SK-N-SH (cell line): ENCODE measurements at regions of chr2 and their contacts with region 1.

Region 1: DNA sequence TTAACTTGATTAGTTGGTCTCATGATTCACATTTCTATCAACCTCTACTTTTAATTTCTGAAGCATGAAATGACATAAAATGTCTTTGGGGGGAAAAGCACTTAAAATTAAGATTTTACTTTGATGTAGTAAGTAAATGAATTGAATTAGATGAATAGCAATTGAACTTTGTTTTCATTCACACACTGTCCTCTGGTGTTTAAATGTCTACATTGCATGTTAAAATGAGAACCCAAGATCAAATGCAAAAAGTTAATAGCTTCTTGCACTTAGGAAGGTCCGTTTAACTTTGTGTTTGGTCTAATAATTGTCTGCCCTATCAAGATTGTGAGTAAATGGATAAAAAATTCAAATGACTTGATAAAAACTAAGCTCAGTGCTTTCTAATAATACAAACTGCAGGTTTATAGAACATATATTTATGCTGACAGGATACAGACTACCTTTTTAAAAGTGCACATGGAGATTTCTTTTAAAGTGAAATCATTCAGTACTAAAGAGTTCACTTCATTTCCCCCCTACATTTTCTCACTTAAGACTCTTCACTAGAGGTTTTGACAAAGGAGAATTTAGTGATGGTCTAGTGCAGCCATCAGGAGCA is 156.2 kb upstream of the NABP1 start:
- DNase-seq: peak; percentile 46
- H3K4me3 ChIP-seq: no peak overlapping the region; a peak in 1 of 4 replicates
- H3K27ac ChIP-seq: peak overlapping the region in 1 of 2 experiments; percentile 51; a peak in 1 of 4 replicates
- H3K4me1 ChIP-seq: peaks cover 0 to 5% of the 10 kb centered on the region in 2 experiments; a peak in 2 of 4 replicates
- H3K27me3 ChIP-seq: no peaks in the 10 kb centered on the region
- CTCF ChIP-seq: peak; percentile 86
- EP300 ChIP-seq: no peak
- RAD21 ChIP-seq: peak; percentile 87

Region 2: GRCh38 chr2:191158193-191158592 is 363.5 kb before region 1 on chr2:
- CTCF ChIA-PET with region 1: interaction called, 11 read pairs
- POLR2A ChIA-PET with region 1: no interaction called
- DNase-seq: no peak
- H3K4me3 ChIP-seq: no peak overlapping the region
- H3K27ac ChIP-seq: no peak overlapping the region
- H3K4me1 ChIP-seq: no peaks in the 10 kb centered on the region
- H3K27me3 ChIP-seq: no peaks in the 10 kb centered on the region
- CTCF ChIP-seq: no peak
- EP300 ChIP-seq: no peak
- RAD21 ChIP-seq: no peak

Region 3: GRCh38 chr2:191171708-191172355 is 349.9 kb before region 1 on chr2:
- CTCF ChIA-PET with region 1: interaction called, 35 read pairs
- POLR2A ChIA-PET with region 1: no interaction called
- DNase-seq: no peak
- H3K4me3 ChIP-seq: 0 out of 4 replicates have a peak overlapping the region, but pooled peaks of 1 of the 2 experiments have one; percentile 18
- H3K27ac ChIP-seq: peak overlapping the region; percentile 88 to 90
- H3K4me1 ChIP-seq: peaks cover 12 to 37% of the 10 kb centered on the region in 2 experiments
- H3K27me3 ChIP-seq: no peaks in the 10 kb centered on the region
- CTCF ChIP-seq: no peak
- EP300 ChIP-seq: peak in 1 of 2 experiments; percentile 93; a peak in 2 of 4 replicates
- RAD21 ChIP-seq: no peak

Region 4: GRCh38 chr2:191245046-191245868 is 276.5 kb before region 1 on chr2 and contains the start of gene MYO1B:
- CTCF ChIA-PET with region 1: interaction called, 11 read pairs
- POLR2A ChIA-PET with region 1: no interaction called
- DNase-seq: peak; percentile 94
- H3K4me3 ChIP-seq: peak within 1 kb of the TSS; percentile 74 to 93
- H3K27ac ChIP-seq: peak within 1 kb of the TSS; percentile 90 to 99
- H3K4me1 ChIP-seq: peaks cover 22 to 30% of the 10 kb centered on the region in 2 experiments; a peak in 3 of 4 replicates
- H3K27me3 ChIP-seq: no peaks in the 10 kb centered on the region
- CTCF ChIP-seq: peak; percentile 67
- EP300 ChIP-seq: peak in 1 of 2 experiments; percentile 26; a peak in 1 of 4 replicates
- RAD21 ChIP-seq: peak; percentile 83
- polyA plus RNA-seq, gene MYO1B: 20.2 and 26.5 TPM in 2 replicates

Region 5: GRCh38 chr2:191434072-191434471 is 87.6 kb before region 1 on chr2:
- CTCF ChIA-PET with region 1: no interaction called
- POLR2A ChIA-PET with region 1: no interaction called
- DNase-seq: no peak
- H3K4me3 ChIP-seq: no peak overlapping the region
- H3K27ac ChIP-seq: no peak overlapping the region
- H3K4me1 ChIP-seq: no peaks in the 10 kb centered on the region; a peak in 1 of 4 replicates
- H3K27me3 ChIP-seq: no peaks in the 10 kb centered on the region
- CTCF ChIP-seq: no peak
- EP300 ChIP-seq: no peak
- RAD21 ChIP-seq: no peak

Region 6: GRCh38 chr2:191544461-191545062 is 22.9 kb after region 1 on chr2:
- CTCF ChIA-PET with region 1: interaction called, 15 read pairs
- POLR2A ChIA-PET with region 1: no interaction called
- DNase-seq: no peak
- H3K4me3 ChIP-seq: no peak overlapping the region
- H3K27ac ChIP-seq: no peak overlapping the region
- H3K4me1 ChIP-seq: peaks cover 0 to 4% of the 10 kb centered on the region in 2 experiments; a peak in 2 of 4 replicates
- H3K27me3 ChIP-seq: no peaks in the 10 kb centered on the region
- CTCF ChIP-seq: no peak
- EP300 ChIP-seq: no peak
- RAD21 ChIP-seq: no peak

Region 7: DNA sequence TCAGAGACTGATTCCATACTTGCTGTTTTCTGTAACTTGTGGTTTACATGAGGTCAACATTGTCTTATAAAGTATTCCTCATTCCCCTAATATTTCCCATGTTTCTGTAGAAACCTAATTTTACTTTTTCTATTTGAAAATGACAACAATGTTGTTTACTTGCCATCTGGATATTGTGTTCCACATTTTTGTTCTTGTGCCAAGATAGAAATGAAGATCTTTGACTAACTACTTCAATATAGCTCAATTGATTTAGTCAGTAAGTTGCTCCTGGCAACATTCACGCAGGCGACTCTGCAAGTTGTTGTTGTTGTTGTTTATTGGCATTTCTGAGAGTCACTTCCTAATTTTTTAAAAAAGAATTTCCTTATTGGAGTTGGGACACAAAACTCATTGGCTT is 255.6 kb after region 1 on chr2:
- CTCF ChIA-PET with region 1: no interaction called
- POLR2A ChIA-PET with region 1: no interaction called
- DNase-seq: no peak
- H3K4me3 ChIP-seq: no peak overlapping the region
- H3K27ac ChIP-seq: no peak overlapping the region
- H3K4me1 ChIP-seq: no peaks in the 10 kb centered on the region
- H3K27me3 ChIP-seq: no peaks in the 10 kb centered on the region; the same call in 1 of the 2 replicates
- CTCF ChIP-seq: no peak
- EP300 ChIP-seq: no peak
- RAD21 ChIP-seq: no peak